B cell (primary cell): ENCODE measurements at regions of chr6 and their contacts with region 1.

Region 1: DNA sequence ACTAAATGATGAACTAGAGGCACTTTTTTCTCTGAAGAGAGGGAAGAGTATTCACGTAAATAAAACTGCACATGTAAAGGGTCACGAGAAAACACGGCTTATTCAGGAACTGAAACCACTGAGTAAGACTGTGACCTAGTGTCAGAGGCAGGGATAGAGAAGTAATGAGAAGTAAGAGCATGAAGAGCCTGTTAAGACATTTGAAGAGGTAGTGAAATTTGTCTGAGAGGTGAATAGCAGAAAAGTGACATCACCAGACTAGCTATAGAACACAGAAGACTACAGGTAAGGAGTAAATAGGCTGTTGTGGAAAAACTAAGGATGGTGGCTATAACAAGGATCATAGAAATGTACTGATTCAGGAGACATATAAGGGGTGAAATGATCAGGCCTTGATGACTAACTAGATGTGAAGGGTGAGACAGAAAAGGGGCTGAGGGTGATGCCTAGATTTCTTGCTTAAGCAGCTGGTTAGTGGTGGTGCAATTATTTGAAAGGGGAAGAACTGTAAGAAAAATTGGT is 76.8 kb downstream of the REV3L start:
- DNase-seq: peak; percentile 93
- ATAC-seq: peak; percentile 97
- H3K4me3 ChIP-seq: no peak overlapping the region
- H3K4me3 Mint-ChIP-seq: peak overlapping the region; percentile 64
- H3K27ac ChIP-seq: peak overlapping the region; percentile 73 to 94
- H3K27ac Mint-ChIP-seq: peak overlapping the region; percentile 85
- H3K4me1 ChIP-seq: peaks cover 15 to 17% of the 10 kb centered on the region in 2 donors
- H3K4me1 Mint-ChIP-seq: peaks cover 27% of the 10 kb centered on the region
- H3K27me3 ChIP-seq: no peaks in the 10 kb centered on the region
- H3K27me3 Mint-ChIP-seq: no peaks in the 10 kb centered on the region
- CTCF ChIP-seq: no peak

Region 2: DNA sequence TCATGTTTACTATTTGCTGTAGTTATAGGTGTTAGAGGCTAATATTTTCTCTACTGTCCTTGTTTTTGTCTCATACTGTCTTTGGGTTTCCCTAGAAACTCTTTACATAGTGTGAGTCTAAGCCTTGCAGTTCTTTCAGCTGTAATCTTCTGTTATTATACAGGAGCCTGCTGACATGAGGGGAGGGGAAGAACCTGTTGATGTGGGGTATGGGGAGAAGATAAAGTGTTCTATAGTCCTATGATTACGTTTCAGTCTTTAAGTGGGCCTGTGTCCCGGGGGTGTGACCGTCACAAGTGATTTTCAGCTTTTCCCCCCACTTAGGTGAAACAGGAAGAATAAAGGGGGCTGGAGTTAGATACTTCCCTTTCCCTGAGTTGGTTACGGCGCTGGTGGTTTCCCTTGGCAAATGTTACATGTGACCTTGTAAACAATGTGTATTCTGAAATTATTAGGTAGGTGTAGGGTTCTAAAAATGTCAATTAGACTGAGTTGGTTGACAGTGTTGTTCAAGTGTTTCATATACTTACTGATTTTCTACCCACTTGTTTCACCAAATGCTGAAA is 35.5 kb after region 1 on chr6:
- CTCF ChIA-PET with region 1: no interaction called
- POLR2A ChIA-PET with region 1: no interaction called
- intact Hi-C with region 1: loop called (anchors 5 kb)
- DNase-seq: peak; percentile 81
- ATAC-seq: peak; percentile 76
- H3K4me3 ChIP-seq: peak overlapping the region in 2 of 5 experiments; percentile 5 to 13
- H3K4me3 Mint-ChIP-seq: peak overlapping the region; percentile 71
- H3K27ac ChIP-seq: peak overlapping the region in 1 of 2 donors; percentile 33
- H3K27ac Mint-ChIP-seq: peak overlapping the region; percentile 74
- H3K4me1 ChIP-seq: peaks cover 12% of the 10 kb centered on the region in 2 donors
- H3K4me1 Mint-ChIP-seq: peaks cover 27% of the 10 kb centered on the region
- H3K27me3 ChIP-seq: no peaks in the 10 kb centered on the region
- H3K27me3 Mint-ChIP-seq: no peaks in the 10 kb centered on the region
- CTCF ChIP-seq: no peak